WTC11 (cell line): ENCODE measurements at regions of chr3 and their contacts with region 1.

Region 1: DNA sequence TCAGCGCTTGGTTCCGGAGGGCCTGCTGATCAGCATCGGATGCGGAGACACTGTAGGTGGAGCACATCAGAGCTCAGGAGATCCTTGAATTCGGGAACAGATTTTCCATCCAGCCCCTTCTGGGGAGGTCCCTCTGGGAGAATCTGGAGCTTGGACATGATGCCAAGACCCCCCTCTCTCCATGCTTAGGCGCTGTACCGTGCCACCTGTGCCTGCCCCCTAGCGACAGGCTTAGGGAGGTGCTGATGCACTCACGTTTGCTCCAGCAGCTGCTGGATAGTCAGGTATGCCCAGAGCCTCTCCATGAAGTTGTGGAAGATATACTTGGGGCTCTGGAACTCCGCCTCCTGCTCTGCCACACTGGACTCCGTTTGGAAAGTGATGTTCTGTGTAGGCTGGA is 9.7 kb downstream of the ITIH4 start:
- DNase-seq: peak; percentile 76
- ATAC-seq: peak; percentile 93
- H3K4me3 Mint-ChIP-seq: no peak overlapping the region
- H3K27ac Mint-ChIP-seq: no peak overlapping the region
- H3K4me1 Mint-ChIP-seq: peaks cover 12% of the 10 kb centered on the region
- H3K27me3 Mint-ChIP-seq: no peaks in the 10 kb centered on the region
- CTCF ChIP-seq: peak; percentile 91

Region 2: GRCh38 chr3:52714335-52715302 is 106.1 kb before region 1 on chr3:
- CTCF ChIA-PET with region 1: interaction called, 13 read pairs
- POLR2A ChIA-PET with region 1: no interaction called
- DNase-seq: peak; percentile 96
- ATAC-seq: peak; percentile 96
- H3K4me3 Mint-ChIP-seq: peak overlapping the region; percentile 68
- H3K27ac Mint-ChIP-seq: no peak overlapping the region
- H3K4me1 Mint-ChIP-seq: peaks cover 7% of the 10 kb centered on the region
- H3K27me3 Mint-ChIP-seq: no peaks in the 10 kb centered on the region
- CTCF ChIP-seq: no peak

Region 3: GRCh38 chr3:52792961-52793695 is 27.6 kb before region 1 on chr3:
- CTCF ChIA-PET with region 1: interaction called, 96 read pairs
- POLR2A ChIA-PET with region 1: no interaction called
- DNase-seq: no peak
- ATAC-seq: no peak
- H3K4me3 Mint-ChIP-seq: no peak overlapping the region
- H3K27ac Mint-ChIP-seq: no peak overlapping the region
- H3K4me1 Mint-ChIP-seq: no peaks in the 10 kb centered on the region
- H3K27me3 Mint-ChIP-seq: no peaks in the 10 kb centered on the region
- CTCF ChIP-seq: no peak

Region 4: GRCh38 chr3:52809662-52810377 is 10.9 kb before region 1 on chr3:
- CTCF ChIA-PET with region 1: interaction called, 34 read pairs
- POLR2A ChIA-PET with region 1: no interaction called
- DNase-seq: no peak
- ATAC-seq: no peak
- H3K4me3 Mint-ChIP-seq: no peak overlapping the region
- H3K27ac Mint-ChIP-seq: no peak overlapping the region
- H3K4me1 Mint-ChIP-seq: no peaks in the 10 kb centered on the region
- H3K27me3 Mint-ChIP-seq: peaks cover 3% of the 10 kb centered on the region; the same call in 1 of the 2 replicates
- CTCF ChIP-seq: no peak

Region 5: DNA sequence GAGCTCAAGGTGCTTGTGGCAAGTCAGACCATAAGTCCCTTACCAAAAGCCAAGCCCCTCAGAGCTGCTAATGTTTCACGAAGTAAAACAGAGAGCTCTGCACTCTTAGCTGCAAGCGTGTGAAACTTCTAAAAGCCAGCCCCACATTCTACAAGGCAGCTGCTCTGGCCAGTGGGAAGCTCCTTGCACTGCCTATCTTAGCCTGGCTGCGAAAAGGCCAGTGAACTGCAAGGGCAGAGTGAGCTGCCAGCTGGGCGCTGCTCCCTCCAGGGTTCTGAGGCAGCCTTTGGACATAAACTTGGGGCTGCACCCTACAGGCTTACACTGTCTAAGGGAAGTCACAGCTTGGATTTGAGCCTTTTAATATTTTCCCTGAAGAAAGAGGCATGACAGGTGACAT is 16.2 kb after region 1 on chr3:
- CTCF ChIA-PET with region 1: interaction called, 23 read pairs
- POLR2A ChIA-PET with region 1: no interaction called
- DNase-seq: no peak
- ATAC-seq: no peak
- H3K4me3 Mint-ChIP-seq: no peak overlapping the region
- H3K27ac Mint-ChIP-seq: no peak overlapping the region
- H3K4me1 Mint-ChIP-seq: peaks cover 5% of the 10 kb centered on the region; the same call in 1 of the 2 replicates
- H3K27me3 Mint-ChIP-seq: no peaks in the 10 kb centered on the region
- CTCF ChIP-seq: no peak

Region 6: DNA sequence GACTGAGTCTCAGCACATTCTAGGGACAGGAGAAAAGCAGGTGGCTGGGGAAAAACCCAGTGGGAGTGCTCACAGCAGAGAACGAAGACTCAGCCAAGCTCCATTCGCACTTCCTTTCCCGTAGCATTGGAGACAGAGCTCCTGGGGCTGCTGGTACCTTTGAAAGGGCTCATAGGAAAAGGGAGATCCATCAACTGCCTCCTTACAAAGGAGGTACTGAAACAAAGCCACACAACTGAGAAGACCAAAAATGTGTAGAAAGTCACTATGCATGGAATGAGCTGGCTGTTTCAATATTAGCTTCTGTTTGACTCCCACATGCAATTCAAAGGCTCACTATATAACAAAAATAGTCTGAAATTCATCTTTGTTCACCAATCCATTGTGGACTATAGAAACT is 59.7 kb after region 1 on chr3:
- CTCF ChIA-PET with region 1: interaction called, 17 read pairs
- POLR2A ChIA-PET with region 1: no interaction called
- DNase-seq: no peak
- ATAC-seq: no peak
- H3K4me3 Mint-ChIP-seq: no peak overlapping the region
- H3K27ac Mint-ChIP-seq: no peak overlapping the region
- H3K4me1 Mint-ChIP-seq: peaks cover 6% of the 10 kb centered on the region
- H3K27me3 Mint-ChIP-seq: no peaks in the 10 kb centered on the region
- CTCF ChIP-seq: no peak

Region 7: GRCh38 chr3:53130179-53131061 is 309.7 kb after region 1 on chr3 and contains the start of gene RFT1:
- CTCF ChIA-PET with region 1: no interaction called
- POLR2A ChIA-PET with region 1: no interaction called
- DNase-seq: peak; percentile 98
- ATAC-seq: peak; percentile 80
- H3K4me3 Mint-ChIP-seq: peak within 1 kb of the TSS; percentile 85
- H3K27ac Mint-ChIP-seq: peak within 1 kb of the TSS; percentile 92
- H3K4me1 Mint-ChIP-seq: peaks cover 12% of the 10 kb centered on the region
- H3K27me3 Mint-ChIP-seq: no peaks in the 10 kb centered on the region
- CTCF ChIP-seq: no peak
- total RNA-seq, gene RFT1: 26.3 to 28.0 TPM (median 27.1 TPM) in 3 replicates